ENCODE measurements at regions of chr5 and their contacts with region 1.

Region 1: DNA sequence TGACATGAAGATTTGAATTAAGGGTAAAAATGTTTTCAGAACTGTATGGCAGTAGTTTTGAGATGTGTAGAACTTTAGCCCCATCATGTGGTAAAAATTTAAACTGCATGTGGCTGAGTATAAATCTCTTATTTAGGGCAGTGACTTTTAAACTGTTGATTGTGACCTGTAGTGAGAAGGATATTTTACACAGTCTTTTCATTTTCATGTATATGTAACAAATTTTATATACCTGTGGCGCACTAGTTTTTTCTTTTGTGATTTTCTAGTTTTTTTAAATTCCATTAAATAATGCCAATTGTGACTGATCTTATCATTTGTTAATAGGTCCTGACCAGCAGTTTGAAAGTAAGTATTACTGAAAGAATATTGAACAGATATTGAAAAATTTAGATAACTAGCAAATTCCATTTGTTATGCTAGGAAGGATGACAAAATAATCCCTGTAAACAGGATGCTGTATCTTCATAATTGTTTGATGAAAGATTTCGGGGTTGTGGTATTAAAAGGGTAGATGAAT is 47.2 kb downstream of the GPBP1 start:
- DNase-seq: peak; percentile 30 to 50
- H3K4me3 ChIP-seq: no peak overlapping the region
- H3K4me1 ChIP-seq: no peaks in the 10 kb centered on the region
- H3K27me3 ChIP-seq: no peaks in the 10 kb centered on the region

Region 2: GRCh38 chr5:56909294-56910209 is 311.6 kb before region 1 on chr5 and contains the start of gene SETD9:
- in situ Hi-C with region 1: loop called (anchors 10 kb)
- DNase-seq: peak; percentile 94 to 99
- H3K4me3 ChIP-seq: peak within 1 kb of the TSS; percentile 45
- H3K4me1 ChIP-seq: peaks cover 11% of the 10 kb centered on the region
- H3K27me3 ChIP-seq: no peaks in the 10 kb centered on the region

Region 3: GRCh38 chr5:57900381-57900944 is 679.4 kb after region 1 on chr5:
- in situ Hi-C with region 1: no loop called
- DNase-seq: no peak
- H3K4me3 ChIP-seq: no peak overlapping the region
- H3K4me1 ChIP-seq: no peaks in the 10 kb centered on the region
- H3K27me3 ChIP-seq: no peaks in the 10 kb centered on the region